ENCODE measurements at regions of chr2 and their contacts with region 1.

Region 1: DNA sequence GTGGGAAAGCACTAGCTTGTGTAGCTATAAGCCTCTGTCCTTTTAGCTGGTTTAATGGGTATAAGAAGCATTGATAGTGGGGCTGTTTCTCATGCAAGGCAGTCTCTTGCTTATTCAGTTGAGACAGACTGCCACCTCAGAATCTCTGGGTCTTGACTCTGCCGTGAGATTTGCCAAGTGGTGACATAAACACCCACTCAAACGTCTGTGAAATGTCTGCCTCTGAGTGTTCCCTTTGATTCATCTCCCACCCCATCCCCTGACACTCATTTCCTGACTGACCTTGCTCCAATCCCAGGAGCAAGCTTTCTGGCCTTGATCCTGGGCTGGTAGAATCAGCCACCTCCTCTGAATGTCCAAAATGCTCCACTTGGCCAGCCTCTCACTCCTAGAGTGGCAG is 141.9 kb upstream of the RBMS1 start:
- DNase-seq: no peak
- H3K4me3 ChIP-seq: no peak overlapping the region
- H3K27ac ChIP-seq: no peak overlapping the region
- H3K4me1 ChIP-seq: peaks cover 10% of the 10 kb centered on the region
- H3K27me3 ChIP-seq: no peaks in the 10 kb centered on the region
- CTCF ChIP-seq: no peak
- EP300 ChIP-seq: no peak
- POLR2A ChIP-seq: no peak

Region 2: DNA sequence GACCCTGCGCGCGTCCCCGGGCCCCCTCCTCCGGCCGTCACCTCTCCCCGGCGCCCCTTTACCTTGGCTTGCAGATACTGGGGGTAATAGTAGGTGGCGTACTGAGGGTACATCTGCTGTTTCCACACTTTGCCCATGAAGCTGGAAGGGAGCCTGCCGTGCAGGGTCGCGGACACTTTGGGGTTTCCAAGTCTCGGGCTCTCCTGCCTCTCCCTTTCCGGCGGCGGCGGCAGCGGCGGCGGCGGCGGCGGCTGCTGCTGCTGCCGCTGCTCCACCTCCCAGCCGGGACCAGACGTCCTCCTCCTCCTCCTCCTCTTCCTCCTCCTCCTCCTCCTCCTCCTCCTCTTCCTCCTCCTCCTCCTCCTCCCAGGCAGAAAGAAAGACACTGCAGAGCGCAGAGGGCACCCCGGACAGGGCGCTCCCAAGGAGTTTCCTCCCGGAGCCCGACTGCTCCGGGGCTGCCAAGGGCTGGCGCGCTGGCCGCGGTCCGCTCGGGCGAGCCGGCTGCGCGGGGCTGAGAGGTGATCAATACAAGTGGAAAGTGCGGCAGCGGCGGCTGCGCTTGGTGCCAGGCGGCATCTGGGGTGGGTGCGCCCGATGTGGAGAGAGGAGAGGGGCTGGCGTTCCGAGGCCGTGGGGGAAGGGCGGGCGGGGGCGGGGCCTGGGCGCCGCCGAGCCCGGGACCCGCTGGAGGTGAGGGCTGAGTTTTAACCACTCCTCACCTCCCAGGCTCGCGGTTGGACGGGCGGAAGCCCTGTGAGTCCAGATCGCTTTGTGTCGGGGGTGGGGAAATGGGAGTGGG is 142.1 kb before region 1 on chr2 and contains the start of gene RBMS1:
- intact Hi-C with region 1: no loop called
- DNase-seq: peak; percentile 70 to 76 (median 75)
- H3K4me3 ChIP-seq: peak within 1 kb of the TSS; percentile 94
- H3K27ac ChIP-seq: peak within 1 kb of the TSS; percentile 40 to 98
- H3K4me1 ChIP-seq: peaks cover 5% of the 10 kb centered on the region
- H3K27me3 ChIP-seq: no peaks in the 10 kb centered on the region
- CTCF ChIP-seq: no peak
- EP300 ChIP-seq: no peak
- POLR2A ChIP-seq: no peak
- total RNA-seq, gene RBMS1: 67.5 to 91.9 (median 73.8) TPM

Region 3: GRCh38 chr2:160679686-160680085 is 44.2 kb after region 1 on chr2:
- intact Hi-C with region 1: loop called in 1 of 4 experiments (anchors 5 kb)
- DNase-seq: no peak
- H3K4me3 ChIP-seq: no peak overlapping the region
- H3K27ac ChIP-seq: no peak overlapping the region
- H3K4me1 ChIP-seq: peaks cover 2% of the 10 kb centered on the region
- H3K27me3 ChIP-seq: no peaks in the 10 kb centered on the region
- CTCF ChIP-seq: no peak
- EP300 ChIP-seq: no peak
- POLR2A ChIP-seq: no peak

Measured in ovary (tissue), 10 donors.